ENCODE measurements at regions of chr18 and their contacts with region 1.

Region 1: DNA sequence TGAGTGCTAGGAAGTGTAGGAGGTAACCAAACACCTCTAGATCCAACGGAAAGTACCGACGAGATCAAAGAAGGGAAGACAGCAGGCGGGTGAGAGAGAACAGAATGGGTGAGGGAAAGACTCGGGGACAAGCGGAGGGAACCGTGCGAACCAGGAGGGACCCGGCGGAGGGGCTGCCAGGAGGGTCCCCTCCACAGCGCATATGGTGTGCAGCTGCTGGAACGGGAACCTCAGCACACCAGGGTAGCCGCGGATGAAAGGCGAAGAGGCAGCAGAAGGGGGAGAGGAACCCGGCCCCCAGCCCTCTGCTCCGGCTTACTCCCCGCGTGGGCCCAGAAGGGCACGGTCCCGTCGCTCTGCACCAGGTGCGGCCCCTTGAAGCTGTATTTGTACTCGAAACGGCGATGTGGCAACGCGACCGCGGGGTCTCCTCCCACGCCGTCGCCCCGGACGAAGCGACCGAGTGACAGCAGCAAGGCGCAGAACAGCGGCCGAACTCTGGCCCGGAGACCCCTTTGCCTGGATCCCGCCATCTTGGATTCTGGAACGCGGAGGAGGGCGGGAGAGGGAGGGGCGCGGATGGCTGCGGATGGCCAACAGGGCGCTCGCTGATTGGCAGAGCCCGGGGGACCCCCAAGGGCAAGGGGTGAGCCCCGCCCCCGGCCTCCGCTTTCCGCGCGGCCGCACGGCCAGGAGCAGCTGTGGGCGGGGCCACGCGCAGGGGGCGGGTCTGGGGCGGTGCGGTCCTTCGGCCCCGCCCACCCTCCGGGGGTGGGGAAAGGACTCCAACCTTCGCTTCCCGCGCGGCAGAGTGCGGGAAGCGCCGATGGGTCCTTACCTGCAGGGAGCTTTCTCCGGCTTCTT is at the start of gene LMAN1:
- DNase-seq: peak; percentile 92
- ATAC-seq: peak; percentile 96
- H3K4me3 Mint-ChIP-seq: peak within 1 kb of the TSS; percentile 94
- H3K27ac Mint-ChIP-seq: peak within 1 kb of the TSS; percentile 82
- H3K4me1 Mint-ChIP-seq: peaks cover 35% of the 10 kb centered on the region
- H3K27me3 Mint-ChIP-seq: peaks cover 2% of the 10 kb centered on the region
- CTCF ChIP-seq: no peak
- total RNA-seq, gene LMAN1: 33.5 and 40.3 TPM in 2 replicates

Region 2: GRCh38 chr18:57586251-57587049 is 1772.5 kb before region 1 on chr18 and contains the start of gene FECH:
- CTCF ChIA-PET with region 1: no interaction called
- POLR2A ChIA-PET with region 1: no interaction called
- intact Hi-C with region 1: loop called (anchors 10 kb)
- DNase-seq: peak; percentile 70
- ATAC-seq: peak; percentile 96
- H3K4me3 Mint-ChIP-seq: peak within 1 kb of the TSS; percentile 86
- H3K27ac Mint-ChIP-seq: peak within 1 kb of the TSS; percentile 50
- H3K4me1 Mint-ChIP-seq: peaks cover 20% of the 10 kb centered on the region
- H3K27me3 Mint-ChIP-seq: no peaks in the 10 kb centered on the region
- CTCF ChIP-seq: no peak
- total RNA-seq, gene FECH: 9.2 and 9.3 TPM in 2 replicates

Region 3: GRCh38 chr18:59139371-59140298 is 219.3 kb before region 1 on chr18 and contains the start of gene SEC11C:
- CTCF ChIA-PET with region 1: no interaction called
- POLR2A ChIA-PET with region 1: interaction called, 3 read pairs
- intact Hi-C with region 1: loop called (anchors 1 kb)
- DNase-seq: peak; percentile 93
- ATAC-seq: peak; percentile 84
- H3K4me3 Mint-ChIP-seq: peak within 1 kb of the TSS; percentile 95
- H3K27ac Mint-ChIP-seq: peak within 1 kb of the TSS; percentile 100
- H3K4me1 Mint-ChIP-seq: peaks cover 44% of the 10 kb centered on the region
- H3K27me3 Mint-ChIP-seq: peaks cover 8% of the 10 kb centered on the region
- CTCF ChIP-seq: no peak
- total RNA-seq, gene SEC11C: 112 and 126 TPM in 2 replicates

Region 4: GRCh38 chr18:59268721-59269562 is 90.0 kb before region 1 on chr18:
- CTCF ChIA-PET with region 1: no interaction called
- POLR2A ChIA-PET with region 1: no interaction called
- intact Hi-C with region 1: loop called (anchors 5 kb)
- DNase-seq: no peak
- ATAC-seq: peak; percentile 48
- H3K4me3 Mint-ChIP-seq: peak overlapping the region; percentile 66
- H3K27ac Mint-ChIP-seq: no peak overlapping the region
- H3K4me1 Mint-ChIP-seq: peaks cover 49% of the 10 kb centered on the region
- H3K27me3 Mint-ChIP-seq: peaks cover 67% of the 10 kb centered on the region
- CTCF ChIP-seq: no peak

Region 5: GRCh38 chr18:59308248-59308937 is 50.6 kb before region 1 on chr18:
- CTCF ChIA-PET with region 1: interaction called, 4 read pairs
- POLR2A ChIA-PET with region 1: no interaction called
- intact Hi-C with region 1: loop called (anchors 2 kb)
- DNase-seq: peak; percentile 66
- ATAC-seq: peak; percentile 85
- H3K4me3 Mint-ChIP-seq: peak overlapping the region; percentile 52
- H3K27ac Mint-ChIP-seq: no peak overlapping the region
- H3K4me1 Mint-ChIP-seq: peaks cover 6% of the 10 kb centered on the region
- H3K27me3 Mint-ChIP-seq: peaks cover 31% of the 10 kb centered on the region
- CTCF ChIP-seq: no peak

Region 6: GRCh38 chr18:59957971-59958595 is 599.1 kb after region 1 on chr18:
- CTCF ChIA-PET with region 1: no interaction called
- POLR2A ChIA-PET with region 1: no interaction called
- intact Hi-C with region 1: no loop called
- DNase-seq: no peak
- ATAC-seq: no peak
- H3K4me3 Mint-ChIP-seq: no peak overlapping the region
- H3K27ac Mint-ChIP-seq: peak overlapping the region; percentile 43
- H3K4me1 Mint-ChIP-seq: peaks cover 63% of the 10 kb centered on the region
- H3K27me3 Mint-ChIP-seq: no peaks in the 10 kb centered on the region
- CTCF ChIP-seq: no peak

Measured in activated B cell treated with CpG ODN at 0.5 μM for 24 hours (primary cell).